ENCODE measurements at regions of chr15 and their contacts with region 1.

Region 1: DNA sequence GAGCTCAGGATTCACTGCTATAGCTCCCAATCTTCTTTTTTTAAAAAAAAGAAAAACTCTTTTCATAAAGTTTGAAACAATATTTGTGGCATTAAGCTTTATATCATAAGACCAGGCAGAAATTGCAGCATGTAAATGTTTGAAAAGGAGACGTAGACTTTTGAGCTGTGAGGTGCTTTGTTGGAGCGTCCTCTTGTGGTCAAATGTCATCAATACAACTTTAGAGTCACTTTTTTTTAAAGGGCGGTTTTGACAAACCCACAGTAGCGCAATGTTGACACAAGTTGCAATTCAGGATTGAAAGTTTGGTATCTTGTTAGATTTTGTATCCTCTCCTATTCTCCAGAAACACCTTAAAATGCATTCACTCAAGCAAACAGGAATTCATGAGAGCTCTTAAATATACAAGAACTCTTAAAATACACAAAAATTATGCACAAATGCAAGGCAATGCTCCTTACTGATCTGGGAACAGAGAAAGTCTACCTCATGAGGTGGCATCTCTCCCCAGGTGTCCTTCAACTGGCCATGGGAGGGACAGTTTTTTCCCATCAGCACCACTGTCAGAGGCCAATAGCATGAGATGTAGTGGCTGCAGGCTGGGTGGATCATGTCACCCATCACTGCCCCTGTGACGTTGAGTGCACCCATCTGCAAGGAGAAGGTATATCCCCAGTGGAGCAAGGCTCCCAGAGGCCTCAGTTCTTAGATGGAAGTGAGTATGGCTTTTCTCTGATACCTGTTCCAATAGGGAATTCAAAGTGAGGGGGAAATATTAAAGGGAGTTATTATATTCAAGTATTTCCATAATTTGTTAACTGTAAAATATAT is 70.7 kb downstream of the ANXA2 start:
- DNase-seq: no peak

Region 2: GRCh38 chr15:59688841-59689625 is 638.0 kb before region 1 on chr15 and contains the start of gene BNIP2:
- intact Hi-C with region 1: loop called (anchors 5 kb)
- DNase-seq: peak; percentile 99
- total RNA-seq, gene BNIP2: 87.4 TPM

Region 3: DNA sequence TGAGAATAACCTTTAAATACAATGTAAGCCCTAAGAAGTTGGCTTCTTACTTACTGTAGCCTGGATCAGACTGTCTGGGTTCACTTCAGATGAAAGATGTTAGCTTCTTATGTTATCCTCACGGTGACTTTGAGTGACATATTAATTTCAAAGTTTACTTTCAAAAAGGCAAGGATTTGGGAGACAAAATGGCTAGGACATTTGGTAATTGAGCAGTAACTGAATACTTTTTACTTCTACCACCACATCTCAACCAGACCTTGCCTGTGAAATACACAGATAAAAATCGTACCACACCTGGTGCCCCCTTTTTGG is 601.9 kb before region 1 on chr15:
- intact Hi-C with region 1: loop called (anchors 10 kb)
- DNase-seq: no peak

Region 4: GRCh38 chr15:60444289-60444912 is 117.4 kb after region 1 on chr15:
- intact Hi-C with region 1: loop called (anchors 10 kb)
- DNase-seq: no peak

Measured in cardiac septum (tissue), 1 donor.